ENCODE measurements at regions of chr1 and their contacts with region 1.

Region 1: DNA sequence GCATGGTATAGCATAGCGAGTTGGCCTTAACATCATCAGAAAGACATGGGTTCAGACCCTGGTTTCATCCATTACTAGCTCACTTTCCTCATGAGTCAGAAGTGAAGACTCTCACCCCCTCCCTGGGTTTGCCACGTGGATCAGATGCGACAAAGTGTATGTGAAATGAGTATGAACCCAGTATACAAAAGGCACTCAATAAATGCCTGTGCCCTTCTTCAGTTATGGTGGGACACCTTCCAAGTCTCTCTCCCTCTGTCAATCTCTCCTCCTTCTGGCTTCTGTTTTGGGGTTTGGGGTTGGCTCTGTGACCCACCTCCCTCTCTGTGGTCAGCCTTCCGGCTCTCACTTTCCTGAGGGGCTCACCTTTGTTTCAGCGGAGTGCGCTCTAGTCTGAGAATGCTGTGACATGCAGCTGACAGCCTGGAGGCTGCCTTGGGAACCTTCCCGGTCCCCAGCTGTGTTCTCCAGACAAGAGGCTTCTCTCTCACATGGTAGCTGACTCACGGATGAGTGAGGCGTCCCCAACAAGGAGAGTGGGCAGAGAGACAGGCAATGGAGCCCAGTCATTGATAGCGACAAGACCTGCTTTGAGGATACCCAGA is 155.0 kb upstream of the EDN2 start:
- DNase-seq: no peak
- H3K4me3 Mint-ChIP-seq: peak overlapping the region; percentile 62
- H3K27ac Mint-ChIP-seq: no peak overlapping the region
- H3K4me1 Mint-ChIP-seq: peaks cover 38% of the 10 kb centered on the region
- H3K27me3 Mint-ChIP-seq: no peaks in the 10 kb centered on the region

Region 2: DNA sequence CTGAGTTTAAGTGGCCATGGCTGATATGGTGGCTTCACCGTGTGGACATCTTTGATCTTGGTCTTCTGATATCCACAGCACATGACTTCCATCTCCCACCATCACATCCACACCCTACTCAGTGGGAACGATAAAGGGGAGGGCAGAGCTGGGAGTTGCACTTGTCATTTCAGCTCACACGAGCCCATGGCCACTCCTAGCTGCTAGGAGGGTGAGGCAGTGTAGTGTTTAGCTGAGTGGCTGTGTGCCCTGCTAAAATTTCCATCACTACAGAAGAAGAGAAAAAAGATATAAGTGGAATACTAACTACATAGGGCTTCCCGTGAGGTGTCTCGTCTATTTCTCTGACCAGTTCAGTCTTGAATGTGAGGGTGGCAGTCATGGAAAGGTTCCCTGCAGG is 31.6 kb before region 1 on chr1:
- intact Hi-C with region 1: loop called (anchors 2 kb)
- DNase-seq: no peak
- H3K4me3 Mint-ChIP-seq: peak overlapping the region; percentile 10
- H3K27ac Mint-ChIP-seq: peak overlapping the region; percentile 65
- H3K4me1 Mint-ChIP-seq: peaks cover 52% of the 10 kb centered on the region
- H3K27me3 Mint-ChIP-seq: no peaks in the 10 kb centered on the region

Region 3: DNA sequence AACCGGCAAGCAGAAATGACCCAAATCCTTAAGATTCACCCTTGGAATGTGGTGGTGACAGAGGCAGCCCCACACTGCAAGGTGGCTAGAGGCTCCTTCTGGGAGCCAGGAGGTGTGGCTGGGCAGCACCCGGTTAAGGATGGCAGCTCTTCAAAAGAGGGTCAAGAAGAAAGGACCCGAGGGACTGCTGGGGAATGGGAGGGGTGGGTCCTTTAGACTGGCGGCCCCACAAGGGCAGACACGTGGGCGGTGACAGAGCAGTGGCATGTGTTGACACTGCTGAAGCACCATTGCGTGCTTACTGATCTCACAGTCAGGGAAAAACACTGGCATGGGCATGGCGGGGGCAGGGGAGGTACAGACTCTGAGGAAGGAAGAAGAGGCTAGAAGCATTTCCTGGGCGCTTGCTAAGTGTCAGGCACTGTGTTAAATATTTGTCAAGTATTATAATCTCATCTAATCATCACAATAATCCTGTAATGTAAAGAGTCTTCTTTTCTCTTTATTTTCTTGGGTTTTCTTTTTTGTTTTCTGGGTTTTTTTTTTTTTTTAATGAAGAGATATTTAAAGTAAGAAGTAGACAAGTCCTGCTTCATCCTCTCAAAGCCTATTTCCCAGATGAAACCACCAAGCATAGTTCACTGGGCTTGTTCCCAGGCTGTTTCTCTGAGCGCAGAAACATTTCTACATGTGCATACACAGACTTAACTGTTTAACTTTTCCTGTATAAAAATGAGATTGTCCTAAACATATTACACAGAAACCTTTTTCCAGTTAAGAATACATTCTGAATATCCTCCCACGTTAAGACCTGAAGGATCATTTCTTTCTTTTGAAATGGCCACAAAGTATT is 10.8 kb after region 1 on chr1:
- intact Hi-C with region 1: loop called (anchors 1 kb)
- DNase-seq: no peak
- H3K4me3 Mint-ChIP-seq: no peak overlapping the region
- H3K27ac Mint-ChIP-seq: peak overlapping the region; percentile 76
- H3K4me1 Mint-ChIP-seq: peaks cover 87% of the 10 kb centered on the region
- H3K27me3 Mint-ChIP-seq: no peaks in the 10 kb centered on the region

Region 4: GRCh38 chr1:41728403-41729202 is 89.2 kb after region 1 on chr1:
- intact Hi-C with region 1: loop called (anchors 1 kb)
- DNase-seq: peak; percentile 47
- H3K4me3 Mint-ChIP-seq: peak overlapping the region; percentile 34
- H3K27ac Mint-ChIP-seq: peak overlapping the region; percentile 84
- H3K4me1 Mint-ChIP-seq: peaks cover 39% of the 10 kb centered on the region
- H3K27me3 Mint-ChIP-seq: peaks cover 1% of the 10 kb centered on the region

Region 5: GRCh38 chr1:41751804-41752513 is 112.5 kb after region 1 on chr1:
- intact Hi-C with region 1: loop called (anchors 1 kb)
- DNase-seq: no peak
- H3K4me3 Mint-ChIP-seq: peak overlapping the region; percentile 48
- H3K27ac Mint-ChIP-seq: peak overlapping the region; percentile 81
- H3K4me1 Mint-ChIP-seq: peaks cover 90% of the 10 kb centered on the region
- H3K27me3 Mint-ChIP-seq: no peaks in the 10 kb centered on the region

Region 6: DNA sequence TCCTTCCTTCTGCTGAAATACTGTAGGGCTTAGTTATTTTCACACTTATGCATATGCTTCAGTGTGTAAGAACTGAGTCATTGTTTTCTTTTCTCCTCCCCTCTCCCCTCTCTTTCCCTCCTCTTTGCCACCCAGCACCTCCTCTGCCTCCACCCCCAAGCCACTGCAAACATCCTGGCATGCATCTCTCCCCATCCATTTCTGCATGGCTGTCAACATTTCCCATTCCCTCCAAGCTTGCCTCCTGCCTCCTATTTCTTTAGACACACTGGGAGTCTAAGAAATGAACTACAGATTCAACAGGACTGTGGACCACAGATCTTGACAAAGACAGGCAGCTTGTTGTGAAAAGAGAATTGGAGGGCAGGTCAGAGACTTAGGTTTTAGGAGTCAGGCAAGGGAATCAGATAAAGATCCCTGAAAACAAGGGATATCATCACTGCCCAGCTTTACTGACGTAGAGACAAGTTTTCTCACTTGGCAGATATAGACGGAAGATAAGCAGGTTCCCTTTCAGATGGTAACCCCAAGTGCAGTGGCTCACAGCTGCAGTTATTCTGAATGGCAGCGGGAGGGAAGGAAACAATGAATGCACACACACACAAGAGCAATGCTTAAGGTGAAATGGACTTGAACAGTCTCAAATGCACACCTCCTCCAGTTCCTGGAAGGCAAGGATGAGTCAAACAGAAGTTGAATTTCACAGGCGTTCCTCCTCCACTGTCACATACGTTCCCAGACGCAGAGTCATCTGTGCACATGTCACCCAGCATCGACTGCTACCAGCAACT is 223.1 kb after region 1 on chr1:
- intact Hi-C with region 1: loop called (anchors 1 kb)
- DNase-seq: peak; percentile 51
- H3K4me3 Mint-ChIP-seq: peak overlapping the region; percentile 50
- H3K27ac Mint-ChIP-seq: peak overlapping the region; percentile 90
- H3K4me1 Mint-ChIP-seq: peaks cover 47% of the 10 kb centered on the region
- H3K27me3 Mint-ChIP-seq: no peaks in the 10 kb centered on the region

Region 7: DNA sequence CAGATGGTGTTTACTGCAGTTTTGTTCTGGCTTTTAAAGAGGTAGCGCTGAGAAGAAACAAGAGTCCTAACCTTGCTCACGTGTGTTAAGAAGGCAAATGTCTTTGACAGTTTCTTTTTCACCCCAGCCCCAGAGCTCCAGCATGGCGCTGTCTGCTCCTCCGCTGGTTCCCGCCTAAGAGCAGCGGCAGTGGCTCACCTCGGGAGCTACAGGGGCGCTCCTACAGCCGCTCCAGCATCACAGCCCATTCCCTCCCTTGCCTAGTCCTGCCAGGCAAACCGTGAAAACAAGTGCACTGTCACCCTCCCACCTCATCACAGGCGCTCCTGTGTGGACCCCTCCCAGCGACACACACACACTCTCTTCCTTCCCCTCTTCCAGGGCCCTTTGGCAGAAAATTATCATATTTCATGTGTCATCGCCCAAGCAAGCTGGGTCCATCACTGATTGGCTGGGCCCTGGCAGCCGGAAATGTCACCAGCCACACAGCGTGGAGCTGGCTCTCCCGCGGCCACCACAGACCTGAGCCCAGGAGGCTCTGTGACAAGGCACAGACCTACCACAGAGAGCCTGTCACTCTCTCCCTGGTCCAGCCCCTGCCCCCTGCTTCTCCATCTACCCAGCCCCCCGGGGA is 280.4 kb after region 1 on chr1:
- intact Hi-C with region 1: loop called (anchors 5 kb)
- DNase-seq: peak; percentile 83
- H3K4me3 Mint-ChIP-seq: peak overlapping the region; percentile 86
- H3K27ac Mint-ChIP-seq: peak overlapping the region; percentile 95
- H3K4me1 Mint-ChIP-seq: peaks cover 59% of the 10 kb centered on the region
- H3K27me3 Mint-ChIP-seq: peaks cover 4% of the 10 kb centered on the region

Measured in activated T-helper 1 cell treated with anti-CD3 and anti-CD28 coated beads, Interleukin-12 subunit alpha, Interleukin-12 subunit beta, Interleukin-2, Interleukin-4 antibody, amounts not matched to agents 30 ng/mL and 10 ng/mL and 1 ng/mL, durations not matched to agents 14 hours and 24 hours and 36 hours (primary cell).